ENCODE measurements at regions of chr1 and their contacts with region 1.

Region 1: DNA sequence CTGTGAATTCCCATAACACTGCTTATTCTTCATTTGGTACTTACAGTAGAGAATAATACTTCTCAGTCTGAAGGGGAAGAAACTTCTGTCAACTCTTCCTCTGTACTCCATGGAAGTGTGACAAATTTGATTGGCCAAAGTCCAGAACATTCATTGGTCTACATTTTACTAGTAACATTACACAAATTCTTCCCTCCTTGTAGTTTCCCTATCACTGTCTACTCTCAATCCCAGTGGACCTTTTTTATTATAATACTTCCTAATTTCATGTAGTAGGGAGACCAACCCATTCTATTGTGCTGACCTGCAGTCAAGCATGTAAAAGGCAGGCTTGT is 74.7 kb downstream of the ALG6 start:
- DNase-seq: peak; percentile 12
- ATAC-seq: peak; percentile 18; the same call in 1 of the 2 replicates
- H3K4me3 ChIP-seq: no peak overlapping the region
- H3K27ac ChIP-seq: no peak overlapping the region
- H3K4me1 ChIP-seq: peaks cover 2% of the 10 kb centered on the region; the same call in 1 of the 2 replicates
- H3K27me3 ChIP-seq: no peaks in the 10 kb centered on the region
- CTCF ChIP-seq: no peak
- POLR2A ChIP-seq: no peak
- RAD21 ChIP-seq: no peak

Region 2: GRCh38 chr1:62493656-62494055 is 948.5 kb before region 1 on chr1:
- CTCF ChIA-PET with region 1: no interaction called
- POLR2A ChIA-PET with region 1: no interaction called
- dilution Hi-C with region 1: no loop called
- in situ Hi-C with region 1: no loop called
- intact Hi-C with region 1: no loop called
- DNase-seq: peak; percentile 45
- ATAC-seq: peak; percentile 62; the same call in 1 of the 2 replicates
- H3K4me3 ChIP-seq: no peak overlapping the region
- H3K27ac ChIP-seq: no peak overlapping the region
- H3K4me1 ChIP-seq: peaks cover 2% of the 10 kb centered on the region; the same call in 1 of the 2 replicates
- H3K27me3 ChIP-seq: no peaks in the 10 kb centered on the region
- CTCF ChIP-seq: no peak
- POLR2A ChIP-seq: no peak
- RAD21 ChIP-seq: no peak

Region 3: DNA sequence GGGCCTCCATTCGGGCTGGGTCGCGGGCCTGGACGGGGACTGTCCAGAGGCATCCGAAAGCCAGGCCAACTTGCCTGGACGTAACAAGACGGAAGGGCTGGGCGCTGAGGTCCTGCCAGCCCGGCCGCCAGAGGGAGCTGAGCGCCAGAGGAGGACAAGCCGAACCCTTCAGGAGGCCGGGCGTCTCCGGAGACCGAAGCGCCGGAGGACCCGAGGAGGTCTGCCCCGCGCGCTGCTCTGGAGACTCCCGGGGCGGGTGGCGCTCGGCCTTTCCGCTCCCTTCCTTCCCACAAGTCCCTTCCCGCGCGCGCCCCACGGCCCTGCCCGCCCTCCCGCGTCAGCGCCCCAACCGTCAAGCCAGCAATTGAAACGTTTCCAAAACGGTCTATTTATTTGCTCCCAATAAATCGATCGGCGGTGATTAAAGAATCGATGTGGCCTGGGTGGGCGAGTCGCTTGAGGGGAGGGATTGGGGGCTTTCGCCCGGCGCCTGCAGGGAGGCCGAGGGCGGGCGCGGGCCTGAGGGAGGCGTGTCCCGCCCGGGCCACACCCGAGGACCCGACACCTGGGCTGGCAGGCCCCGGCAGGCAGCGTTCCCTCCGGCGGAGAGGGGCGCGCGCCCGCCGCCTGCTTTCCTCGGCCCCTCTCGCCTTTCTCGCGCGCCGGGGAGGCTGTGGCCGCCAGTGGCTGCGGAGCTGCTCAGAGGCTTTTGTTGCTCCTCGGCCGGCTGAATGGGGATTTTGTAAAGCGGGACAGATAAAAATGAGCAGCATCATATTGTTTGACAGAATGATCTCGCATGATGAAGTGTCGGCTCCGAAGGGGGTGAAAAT is 124.9 kb before region 1 on chr1:
- CTCF ChIA-PET with region 1: no interaction called
- POLR2A ChIA-PET with region 1: no interaction called
- dilution Hi-C with region 1: no loop called
- in situ Hi-C with region 1: no loop called
- intact Hi-C with region 1: loop called (anchors 1 kb)
- DNase-seq: peak; percentile 41
- ATAC-seq: peak; percentile 83
- H3K4me3 ChIP-seq: peak overlapping the region; percentile 21
- H3K27ac ChIP-seq: no peak overlapping the region
- H3K4me1 ChIP-seq: no peaks in the 10 kb centered on the region
- H3K27me3 ChIP-seq: peaks cover 71% of the 10 kb centered on the region
- CTCF ChIP-seq: peak; percentile 55
- POLR2A ChIP-seq: no peak
- RAD21 ChIP-seq: peak; percentile 39

Region 4: DNA sequence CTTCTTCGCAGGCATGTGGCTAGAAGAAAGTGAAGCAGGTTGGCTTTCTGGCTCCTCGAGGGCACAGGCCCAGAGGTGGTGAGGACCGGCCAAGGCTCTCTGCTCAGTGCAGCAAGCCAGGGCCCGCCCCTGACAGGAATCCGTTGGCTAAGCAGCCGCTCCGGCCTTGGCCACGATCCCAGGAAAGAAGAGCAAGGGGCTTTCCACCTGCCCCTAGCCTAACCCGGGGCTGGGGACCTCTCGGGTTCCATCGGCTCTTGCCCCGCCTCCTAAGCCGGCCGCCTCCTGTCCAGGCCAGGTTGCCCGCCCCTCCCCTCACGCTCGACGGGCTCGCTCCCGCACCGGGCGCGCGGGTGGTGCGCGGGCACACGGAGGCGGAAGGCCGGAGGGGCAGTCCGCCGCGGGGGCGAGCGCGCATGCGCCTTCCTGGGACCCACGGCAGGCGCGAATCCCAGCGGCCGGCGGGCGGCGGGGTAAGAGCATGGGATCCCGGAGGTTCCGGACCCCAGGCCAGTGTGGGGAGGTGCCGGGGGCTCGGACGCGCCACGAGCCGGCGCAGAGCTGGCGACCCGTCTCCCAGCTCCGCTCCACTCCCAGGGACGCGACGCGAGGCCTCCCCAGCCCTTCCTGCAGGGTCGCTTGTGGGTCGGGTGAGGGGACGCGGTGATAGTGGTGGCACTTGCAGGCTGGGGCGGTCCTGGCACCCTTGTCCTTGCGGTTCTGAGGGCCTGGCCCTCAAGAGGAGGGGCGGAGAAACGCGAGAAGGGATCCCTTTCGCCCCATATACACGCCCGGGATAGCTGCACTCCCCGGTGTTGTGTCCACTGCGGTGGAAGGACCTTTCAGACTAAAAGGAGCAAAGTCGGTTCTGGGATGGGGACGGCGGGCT is 74.6 kb before region 1 on chr1 and contains the start of gene ALG6:
- CTCF ChIA-PET with region 1: no interaction called
- POLR2A ChIA-PET with region 1: no interaction called
- dilution Hi-C with region 1: no loop called
- in situ Hi-C with region 1: no loop called
- intact Hi-C with region 1: loop called (anchors 2 kb)
- DNase-seq: peak; percentile 87
- ATAC-seq: peak; percentile 98
- H3K4me3 ChIP-seq: peak within 1 kb of the TSS; percentile 88
- H3K27ac ChIP-seq: peak within 1 kb of the TSS; percentile 83
- H3K4me1 ChIP-seq: no peaks in the 10 kb centered on the region
- H3K27me3 ChIP-seq: peaks cover 2% of the 10 kb centered on the region
- CTCF ChIP-seq: 0 out of 2 replicates have a peak, but pooled peaks have one; percentile 14
- POLR2A ChIP-seq: peak; percentile 45; the same call in 1 of the 2 replicates
- RAD21 ChIP-seq: no peak
- total RNA-seq, gene ALG6: 4.8 and 12.2 TPM in 2 replicates

Region 5: GRCh38 chr1:63877816-63878215 is 435.7 kb after region 1 on chr1:
- CTCF ChIA-PET with region 1: no interaction called
- POLR2A ChIA-PET with region 1: no interaction called
- dilution Hi-C with region 1: no loop called
- in situ Hi-C with region 1: no loop called
- intact Hi-C with region 1: no loop called
- DNase-seq: peak; percentile 75
- ATAC-seq: peak; percentile 45
- H3K4me3 ChIP-seq: no peak overlapping the region
- H3K27ac ChIP-seq: peak overlapping the region; percentile 26; the same call in 1 of the 2 replicates
- H3K4me1 ChIP-seq: peaks cover 24% of the 10 kb centered on the region
- H3K27me3 ChIP-seq: no peaks in the 10 kb centered on the region
- CTCF ChIP-seq: no peak
- POLR2A ChIP-seq: no peak
- RAD21 ChIP-seq: no peak

Measured in IMR-90 (cell line).